ENCODE measurements at regions of chr1 and their contacts with region 1.

Region 1: GRCh38 chr1:198157241-198157846 is 546 bp downstream of the NEK7 start:
- DNase-seq: peak; percentile 79
- H3K4me3 Mint-ChIP-seq: peak overlapping the region; percentile 99
- H3K27ac Mint-ChIP-seq: peak overlapping the region; percentile 96
- H3K4me1 Mint-ChIP-seq: peaks cover 36% of the 10 kb centered on the region
- H3K27me3 Mint-ChIP-seq: no peaks in the 10 kb centered on the region

Region 2: GRCh38 chr1:197775282-197776262 is 381.8 kb before region 1 on chr1 and contains the start of gene DENND1B:
- intact Hi-C with region 1: loop called (anchors 2 kb)
- DNase-seq: peak; percentile 83
- H3K4me3 Mint-ChIP-seq: peak within 1 kb of the TSS; percentile 89
- H3K27ac Mint-ChIP-seq: peak within 1 kb of the TSS; percentile 99
- H3K4me1 Mint-ChIP-seq: peaks cover 62% of the 10 kb centered on the region
- H3K27me3 Mint-ChIP-seq: no peaks in the 10 kb centered on the region
- total RNA-seq, gene DENND1B: 18.2 and 19.0 TPM in 2 replicates

Region 3: GRCh38 chr1:198088360-198089071 is 68.8 kb before region 1 on chr1:
- intact Hi-C with region 1: loop called (anchors 1 kb)
- DNase-seq: no peak
- H3K4me3 Mint-ChIP-seq: no peak overlapping the region
- H3K27ac Mint-ChIP-seq: no peak overlapping the region
- H3K4me1 Mint-ChIP-seq: peaks cover 8% of the 10 kb centered on the region
- H3K27me3 Mint-ChIP-seq: no peaks in the 10 kb centered on the region

Region 4: DNA sequence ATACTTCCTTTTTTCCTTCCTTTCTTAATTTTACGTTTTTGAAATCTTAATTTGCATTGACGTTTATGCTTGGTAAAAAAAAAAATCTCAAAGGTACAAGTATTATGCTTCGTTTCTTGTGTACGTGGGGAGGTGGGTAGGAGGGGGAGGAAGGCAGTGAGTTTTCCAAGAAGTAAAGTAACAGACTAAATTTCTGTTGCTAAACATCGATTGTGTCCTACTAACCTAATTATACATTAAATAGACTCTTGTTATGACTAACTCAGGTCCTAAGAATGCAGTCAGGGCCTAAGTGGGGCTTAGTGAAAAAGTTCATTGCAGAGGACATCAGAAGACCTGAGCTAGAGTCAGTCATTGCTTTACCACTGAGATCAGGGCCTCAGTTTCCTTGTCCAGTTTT is 17.0 kb after region 1 on chr1:
- intact Hi-C with region 1: loop called (anchors 1 kb)
- DNase-seq: no peak
- H3K4me3 Mint-ChIP-seq: peak overlapping the region; percentile 38
- H3K27ac Mint-ChIP-seq: peak overlapping the region; percentile 81
- H3K4me1 Mint-ChIP-seq: peaks cover 79% of the 10 kb centered on the region
- H3K27me3 Mint-ChIP-seq: no peaks in the 10 kb centered on the region

Region 5: DNA sequence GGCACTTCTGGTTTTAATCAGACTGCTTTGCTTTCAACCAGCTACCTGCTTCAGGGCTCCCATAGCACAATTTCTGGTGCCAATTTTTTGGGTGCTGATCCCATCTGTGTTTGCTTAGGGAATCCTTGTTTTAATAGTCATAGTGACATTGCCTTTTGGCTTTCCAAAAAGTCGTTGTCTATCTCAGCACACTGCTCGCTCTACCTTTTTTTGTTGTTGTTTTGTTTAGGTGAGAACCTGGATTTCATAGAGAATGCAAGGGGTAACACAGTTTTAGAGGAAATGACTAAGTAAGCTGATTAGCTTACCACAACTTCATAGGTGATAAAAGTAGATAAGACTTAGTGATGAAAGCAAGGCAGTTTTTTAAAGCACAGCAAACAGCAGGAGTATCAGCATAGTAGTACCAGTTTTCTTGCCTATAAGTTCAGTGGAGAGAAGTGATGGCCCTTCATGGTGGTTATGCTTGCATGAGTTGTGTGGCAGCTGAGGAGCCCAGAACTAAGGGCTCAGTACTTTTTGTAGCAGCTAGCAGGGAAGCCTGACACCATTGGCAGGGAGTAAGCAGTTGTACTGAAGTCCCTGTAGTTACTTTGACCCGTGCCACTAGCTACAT is 30.7 kb after region 1 on chr1:
- intact Hi-C with region 1: no loop called
- DNase-seq: no peak
- H3K4me3 Mint-ChIP-seq: peak overlapping the region; percentile 5
- H3K27ac Mint-ChIP-seq: peak overlapping the region; percentile 4
- H3K4me1 Mint-ChIP-seq: peaks cover 66% of the 10 kb centered on the region
- H3K27me3 Mint-ChIP-seq: no peaks in the 10 kb centered on the region

Region 6: GRCh38 chr1:198253668-198254067 is 96.3 kb after region 1 on chr1:
- intact Hi-C with region 1: loop called (anchors 1 kb)
- DNase-seq: no peak
- H3K4me3 Mint-ChIP-seq: peak overlapping the region; percentile 55
- H3K27ac Mint-ChIP-seq: peak overlapping the region; percentile 90
- H3K4me1 Mint-ChIP-seq: peaks cover 41% of the 10 kb centered on the region
- H3K27me3 Mint-ChIP-seq: no peaks in the 10 kb centered on the region

Region 7: GRCh38 chr1:198359024-198359653 is 201.8 kb after region 1 on chr1:
- intact Hi-C with region 1: loop called (anchors 2 kb)
- DNase-seq: no peak
- H3K4me3 Mint-ChIP-seq: no peak overlapping the region
- H3K27ac Mint-ChIP-seq: no peak overlapping the region
- H3K4me1 Mint-ChIP-seq: peaks cover 10% of the 10 kb centered on the region
- H3K27me3 Mint-ChIP-seq: peaks cover 11% of the 10 kb centered on the region

Region 8: GRCh38 chr1:198612471-198613260 is 455.3 kb after region 1 on chr1:
- intact Hi-C with region 1: loop called (anchors 5 kb)
- DNase-seq: no peak
- H3K4me3 Mint-ChIP-seq: peak overlapping the region; percentile 75
- H3K27ac Mint-ChIP-seq: peak overlapping the region; percentile 86
- H3K4me1 Mint-ChIP-seq: peaks cover 59% of the 10 kb centered on the region
- H3K27me3 Mint-ChIP-seq: no peaks in the 10 kb centered on the region

Measured in activated T-helper 2 cell treated with anti-CD3 and anti-CD28 coated beads, Interferon-gamma antibody, Interleukin-2, Interleukin-4, amounts not matched to agents 10 μg/mL and 5 μg/mL and 100 μg/mL, durations not matched to agents 14 hours and 24 hours and 36 hours (primary cell).